ENCODE measurements at regions of chr19 and their contacts with region 1.

Region 1: DNA sequence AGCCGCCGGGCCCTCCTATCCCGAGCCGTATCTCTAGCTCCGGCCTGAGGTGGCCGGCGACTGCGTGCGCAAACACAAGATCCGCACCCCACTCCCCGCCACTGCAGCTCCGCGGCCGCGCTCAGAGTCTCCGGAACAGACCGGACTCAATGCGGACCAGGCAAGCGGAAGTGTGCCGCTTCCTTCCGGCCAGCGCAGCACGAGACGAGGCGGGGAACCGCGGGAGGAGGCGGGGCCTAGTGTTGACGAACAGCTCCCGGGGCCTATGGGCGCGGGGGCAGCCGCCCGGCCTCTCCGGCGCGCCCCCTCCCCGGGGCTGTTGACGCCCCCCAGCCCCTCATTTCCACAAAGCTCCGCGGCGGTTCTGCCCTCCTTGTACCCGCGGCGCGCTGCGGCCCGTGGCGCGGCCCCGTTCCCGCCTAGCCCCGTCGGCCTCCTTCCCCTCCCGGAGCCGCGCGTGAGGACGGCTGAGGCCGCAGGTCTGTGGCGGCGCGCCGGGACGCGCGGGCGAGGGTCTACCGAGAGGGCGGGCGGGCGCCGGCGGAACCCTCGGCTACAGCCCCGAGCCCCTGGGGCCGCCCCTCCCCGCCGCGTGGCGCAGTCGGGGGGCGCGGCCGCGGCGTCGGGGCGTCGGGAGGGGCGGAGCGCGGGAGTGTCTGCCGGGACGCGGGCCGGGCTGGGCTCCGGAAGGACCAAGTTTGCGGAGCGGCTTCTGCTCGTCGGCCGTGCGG is at the start of gene DPY19L3:
- DNase-seq: peak; percentile 95
- ATAC-seq: peak; percentile 97
- H3K4me3 Mint-ChIP-seq: peak within 1 kb of the TSS; percentile 84
- H3K27ac Mint-ChIP-seq: peak within 1 kb of the TSS; percentile 91
- H3K4me1 Mint-ChIP-seq: peaks cover 20% of the 10 kb centered on the region
- H3K27me3 Mint-ChIP-seq: no peaks in the 10 kb centered on the region
- total RNA-seq, gene DPY19L3: 14.3 to 14.6 TPM

Region 2: GRCh38 chr19:31214086-31214485 is 1191.5 kb before region 1 on chr19:
- CTCF ChIA-PET with region 1: no interaction called
- POLR2A ChIA-PET with region 1: no interaction called
- intact Hi-C with region 1: loop called in 1 of 2 experiments (anchors 10 kb)
- DNase-seq: peak; percentile 96
- ATAC-seq: peak; percentile 94
- H3K4me3 Mint-ChIP-seq: peak overlapping the region; percentile 61
- H3K27ac Mint-ChIP-seq: peak overlapping the region; percentile 99
- H3K4me1 Mint-ChIP-seq: peaks cover 36% of the 10 kb centered on the region
- H3K27me3 Mint-ChIP-seq: no peaks in the 10 kb centered on the region

Region 3: GRCh38 chr19:32308436-32309077 is 97.0 kb before region 1 on chr19:
- CTCF ChIA-PET with region 1: no interaction called
- POLR2A ChIA-PET with region 1: no interaction called
- intact Hi-C with region 1: no loop called
- DNase-seq: no peak
- ATAC-seq: no peak
- H3K4me3 Mint-ChIP-seq: no peak overlapping the region
- H3K27ac Mint-ChIP-seq: no peak overlapping the region
- H3K4me1 Mint-ChIP-seq: no peaks in the 10 kb centered on the region
- H3K27me3 Mint-ChIP-seq: peaks cover 22% of the 10 kb centered on the region

Region 4: GRCh38 chr19:32345261-32346207 is 60.1 kb before region 1 on chr19 and contains the start of gene ZNF507:
- CTCF ChIA-PET with region 1: interaction called, 4 read pairs
- POLR2A ChIA-PET with region 1: interaction called, 5 read pairs
- intact Hi-C with region 1: loop called (anchors 1 to 2 kb)
- DNase-seq: peak; percentile 93
- ATAC-seq: peak; percentile 82
- H3K4me3 Mint-ChIP-seq: peak within 1 kb of the TSS; percentile 92
- H3K27ac Mint-ChIP-seq: peak within 1 kb of the TSS; percentile 95
- H3K4me1 Mint-ChIP-seq: peaks cover 42% of the 10 kb centered on the region
- H3K27me3 Mint-ChIP-seq: peaks cover 2% of the 10 kb centered on the region
- total RNA-seq, gene ZNF507: 25.2 to 27.6 TPM

Region 5: GRCh38 chr19:32674959-32675719 is 269.5 kb after region 1 on chr19 and contains the start of gene ANKRD27:
- CTCF ChIA-PET with region 1: no interaction called
- POLR2A ChIA-PET with region 1: no interaction called
- intact Hi-C with region 1: loop called in 1 of 2 experiments (anchors 1 kb)
- DNase-seq: peak; percentile 99
- ATAC-seq: peak; percentile 95
- H3K4me3 Mint-ChIP-seq: peak within 1 kb of the TSS; percentile 78
- H3K27ac Mint-ChIP-seq: peak within 1 kb of the TSS; percentile 69
- H3K4me1 Mint-ChIP-seq: peaks cover 30% of the 10 kb centered on the region
- H3K27me3 Mint-ChIP-seq: peaks cover 11% of the 10 kb centered on the region
- total RNA-seq, gene ANKRD27: 36.6 to 37.0 TPM

Region 6: GRCh38 chr19:33080761-33081681 is 675.4 kb after region 1 on chr19 and contains the start of gene GPATCH1:
- CTCF ChIA-PET with region 1: no interaction called
- POLR2A ChIA-PET with region 1: no interaction called
- intact Hi-C with region 1: loop called in 1 of 2 experiments (anchors 2 kb)
- DNase-seq: peak; percentile 93
- ATAC-seq: peak; percentile 94
- H3K4me3 Mint-ChIP-seq: peak within 1 kb of the TSS; percentile 99
- H3K27ac Mint-ChIP-seq: peak within 1 kb of the TSS; percentile 97
- H3K4me1 Mint-ChIP-seq: peaks cover 16% of the 10 kb centered on the region
- H3K27me3 Mint-ChIP-seq: no peaks in the 10 kb centered on the region
- total RNA-seq, gene GPATCH1: 9.5 to 11.1 TPM

Measured in activated CD4-positive, alpha-beta T cell treated with anti-CD3 and anti-CD28 coated beads for 36 hours (primary cell).